Adrenal gland (tissue), 19 donors: ENCODE measurements at regions of chr12 and their contacts with region 1.

Region 1: GRCh38 chr12:111753144-111753881 is 13.4 kb upstream of the ALDH2 start:
- DNase-seq: peak; percentile 77 to 91 (median 86)
- H3K4me3 ChIP-seq: no peak overlapping the region
- H3K27ac ChIP-seq: peak overlapping the region in 4 of 5 donors; percentile 50 to 80 (median 66)
- H3K4me1 ChIP-seq: peaks cover 20 to 47% of the 10 kb centered on the region in 2 donors
- H3K27me3 ChIP-seq: no peaks in the 10 kb centered on the region
- CTCF ChIP-seq: peak; percentile 56 to 90 (median 83)
- POLR2A ChIP-seq: no peak

Region 2: GRCh38 chr12:111599459-111600204 is 153.7 kb before region 1 on chr12:
- intact Hi-C with region 1: no loop called
- DNase-seq: peak; percentile 88 to 94 (median 92)
- H3K4me3 ChIP-seq: peak overlapping the region in 3 of 4 donors; percentile 38 to 98 (median 84)
- H3K27ac ChIP-seq: peak overlapping the region; percentile 48 to 100 (median 95)
- H3K4me1 ChIP-seq: peaks cover 29 to 31% of the 10 kb centered on the region in 2 donors
- H3K27me3 ChIP-seq: no peaks in the 10 kb centered on the region
- CTCF ChIP-seq: peak in 1 of 6 experiments; percentile 4
- POLR2A ChIP-seq: peak; percentile 52 to 66

Region 3: GRCh38 chr12:111788178-111788654 is 34.9 kb after region 1 on chr12:
- intact Hi-C with region 1: loop called in 1 of 2 experiments (anchors 2 kb)
- DNase-seq: peak; percentile 68 to 90 (median 87)
- H3K4me3 ChIP-seq: no peak overlapping the region
- H3K27ac ChIP-seq: peak overlapping the region in 4 of 5 donors; percentile 17 to 92 (median 70)
- H3K4me1 ChIP-seq: peaks cover 29 to 36% of the 10 kb centered on the region in 2 donors
- H3K27me3 ChIP-seq: no peaks in the 10 kb centered on the region
- CTCF ChIP-seq: peak in 5 of 6 experiments; percentile 49 to 89 (median 72)
- POLR2A ChIP-seq: peak in 1 of 2 donors; percentile 6

Region 4: DNA sequence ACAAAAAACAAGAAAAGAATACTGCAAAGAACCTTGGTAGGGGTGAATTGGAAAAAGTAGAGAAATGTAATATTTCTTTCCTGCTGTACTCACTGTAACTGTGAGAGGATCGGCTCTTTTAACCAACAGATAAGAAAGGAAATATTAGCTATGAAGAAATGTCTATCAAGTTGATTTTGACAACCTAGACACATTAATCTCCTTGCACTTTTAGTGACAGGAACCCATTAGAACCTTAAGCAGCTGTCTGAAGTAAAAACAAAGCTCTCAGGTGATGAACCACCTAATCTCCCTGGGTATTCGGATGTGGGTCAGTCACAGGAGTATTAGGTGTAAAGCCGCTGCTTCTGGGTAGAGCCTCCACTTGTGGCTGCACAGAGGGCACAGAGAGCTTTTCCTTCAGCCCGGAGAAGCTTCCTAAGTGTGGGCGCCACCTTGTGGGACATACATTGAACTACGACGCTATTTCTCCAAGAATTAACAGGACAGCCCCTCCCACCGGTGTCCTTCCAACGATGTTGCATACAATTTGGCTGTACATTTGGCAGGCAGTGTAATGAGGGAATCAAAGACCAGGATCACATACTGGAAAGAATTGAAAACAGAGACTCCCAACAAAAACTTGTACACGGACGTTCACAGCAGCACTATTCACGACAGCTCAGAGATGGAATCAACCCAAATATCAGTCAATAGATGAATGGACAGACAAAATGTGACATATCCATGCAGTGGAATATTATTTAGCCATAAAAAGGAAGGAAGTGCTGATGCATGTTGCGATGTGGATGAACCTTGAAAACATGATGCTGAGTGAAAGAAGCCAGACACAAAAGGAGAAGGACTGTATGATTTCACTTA is 59.8 kb after region 1 on chr12:
- intact Hi-C with region 1: loop called (anchors 5 kb)
- DNase-seq: peak; percentile 77 to 93 (median 87)
- H3K4me3 ChIP-seq: no peak overlapping the region
- H3K27ac ChIP-seq: peak overlapping the region in 2 of 5 donors; percentile 21 to 36
- H3K4me1 ChIP-seq: peaks cover 0 to 10% of the 10 kb centered on the region in 2 donors
- H3K27me3 ChIP-seq: no peaks in the 10 kb centered on the region
- CTCF ChIP-seq: peak; percentile 77 to 91 (median 87)
- POLR2A ChIP-seq: no peak